Activated CD4-positive, alpha-beta memory T cell treated with anti-CD3 and anti-CD28 coated beads for 36 hours (primary cell): ENCODE measurements at regions of chr13 and their contacts with region 1.

Region 1: GRCh38 chr13:40982772-40983171 is 36.3 kb downstream of the ELF1 start:
- DNase-seq: peak; percentile 60
- H3K4me3 Mint-ChIP-seq: peak overlapping the region; percentile 81
- H3K27ac Mint-ChIP-seq: peak overlapping the region; percentile 92
- H3K4me1 Mint-ChIP-seq: peaks cover 61% of the 10 kb centered on the region
- H3K27me3 Mint-ChIP-seq: no peaks in the 10 kb centered on the region

Region 2: GRCh38 chr13:40770934-40771618 is 211.7 kb before region 1 on chr13 and contains the start of gene MRPS31:
- CTCF ChIA-PET with region 1: no interaction called
- POLR2A ChIA-PET with region 1: no interaction called
- intact Hi-C with region 1: loop called (anchors 2 kb)
- DNase-seq: peak; percentile 97
- H3K4me3 Mint-ChIP-seq: peak within 1 kb of the TSS; percentile 100
- H3K27ac Mint-ChIP-seq: peak within 1 kb of the TSS; percentile 94
- H3K4me1 Mint-ChIP-seq: peaks cover 34% of the 10 kb centered on the region
- H3K27me3 Mint-ChIP-seq: no peaks in the 10 kb centered on the region
- total RNA-seq, gene MRPS31: 35.6 to 40.4 TPM

Region 3: GRCh38 chr13:40789275-40790133 is 193.3 kb before region 1 on chr13 and contains the start of gene SLC25A15:
- CTCF ChIA-PET with region 1: no interaction called
- POLR2A ChIA-PET with region 1: no interaction called
- intact Hi-C with region 1: no loop called
- DNase-seq: peak; percentile 80
- H3K4me3 Mint-ChIP-seq: peak within 1 kb of the TSS; percentile 77
- H3K27ac Mint-ChIP-seq: peak within 1 kb of the TSS; percentile 67
- H3K4me1 Mint-ChIP-seq: peaks cover 31% of the 10 kb centered on the region
- H3K27me3 Mint-ChIP-seq: no peaks in the 10 kb centered on the region
- total RNA-seq, gene SLC25A15: 16.2 to 16.9 TPM

Region 4: GRCh38 chr13:40969169-40969901 is 13.4 kb before region 1 on chr13:
- CTCF ChIA-PET with region 1: interaction called, 14 read pairs
- POLR2A ChIA-PET with region 1: interaction called, 5 read pairs
- intact Hi-C with region 1: loop called (anchors 1 kb)
- DNase-seq: peak; percentile 57
- H3K4me3 Mint-ChIP-seq: peak overlapping the region; percentile 9
- H3K27ac Mint-ChIP-seq: peak overlapping the region; percentile 68
- H3K4me1 Mint-ChIP-seq: peaks cover 90% of the 10 kb centered on the region
- H3K27me3 Mint-ChIP-seq: no peaks in the 10 kb centered on the region

Region 5: DNA sequence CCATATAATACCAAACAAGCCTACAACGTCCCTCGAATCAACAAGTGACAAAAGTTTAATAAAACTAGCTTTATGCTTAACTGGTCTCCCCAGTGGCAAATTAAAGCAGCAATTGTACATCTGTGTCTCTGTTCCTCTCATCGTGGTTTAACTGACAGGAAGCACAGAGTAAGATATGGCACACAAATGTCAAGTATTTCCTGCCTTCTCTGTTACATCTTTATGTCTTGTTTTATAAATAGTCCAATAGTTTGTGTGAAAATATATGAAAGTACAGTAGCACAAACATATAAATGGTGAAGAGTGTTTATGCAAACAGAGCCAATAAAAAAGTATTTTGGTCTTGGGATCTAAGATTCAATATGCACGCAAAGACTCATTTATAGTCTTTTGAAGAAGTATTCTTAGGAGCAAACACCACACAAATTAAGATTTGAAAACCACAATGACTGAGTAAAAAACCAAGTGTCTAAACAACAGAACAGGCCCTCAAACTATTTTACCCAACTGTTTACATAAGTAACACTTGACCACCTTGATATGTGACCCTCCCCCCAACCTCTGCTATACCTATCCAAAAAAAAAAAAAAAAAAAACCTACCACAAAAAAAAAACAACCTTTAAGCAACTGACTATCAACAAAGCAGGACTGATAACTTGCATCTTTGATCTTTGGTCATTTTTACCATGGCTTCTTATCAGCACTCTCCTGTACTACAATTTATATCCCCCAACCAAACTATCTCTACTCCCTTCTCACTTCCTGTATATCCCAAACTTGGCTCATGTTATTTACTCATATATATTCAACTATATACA is 22.3 kb after region 1 on chr13:
- CTCF ChIA-PET with region 1: interaction called, 5 read pairs
- POLR2A ChIA-PET with region 1: interaction called, 6 read pairs
- intact Hi-C with region 1: loop called (anchors 1 kb)
- DNase-seq: no peak
- H3K4me3 Mint-ChIP-seq: peak overlapping the region; percentile 64
- H3K27ac Mint-ChIP-seq: peak overlapping the region; percentile 79
- H3K4me1 Mint-ChIP-seq: peaks cover 65% of the 10 kb centered on the region
- H3K27me3 Mint-ChIP-seq: no peaks in the 10 kb centered on the region

Region 6: GRCh38 chr13:41019011-41019487 is 36.3 kb after region 1 on chr13 and contains the start of gene ELF1:
- CTCF ChIA-PET with region 1: interaction called, 5 read pairs
- POLR2A ChIA-PET with region 1: interaction called, 87 read pairs
- intact Hi-C with region 1: loop called (anchors 1 kb)
- DNase-seq: peak; percentile 67
- H3K4me3 Mint-ChIP-seq: peak within 1 kb of the TSS; percentile 92
- H3K27ac Mint-ChIP-seq: peak within 1 kb of the TSS; percentile 98
- H3K4me1 Mint-ChIP-seq: peaks cover 36% of the 10 kb centered on the region
- H3K27me3 Mint-ChIP-seq: no peaks in the 10 kb centered on the region
- total RNA-seq, gene ELF1: 70.8 to 71.2 TPM

Region 7: DNA sequence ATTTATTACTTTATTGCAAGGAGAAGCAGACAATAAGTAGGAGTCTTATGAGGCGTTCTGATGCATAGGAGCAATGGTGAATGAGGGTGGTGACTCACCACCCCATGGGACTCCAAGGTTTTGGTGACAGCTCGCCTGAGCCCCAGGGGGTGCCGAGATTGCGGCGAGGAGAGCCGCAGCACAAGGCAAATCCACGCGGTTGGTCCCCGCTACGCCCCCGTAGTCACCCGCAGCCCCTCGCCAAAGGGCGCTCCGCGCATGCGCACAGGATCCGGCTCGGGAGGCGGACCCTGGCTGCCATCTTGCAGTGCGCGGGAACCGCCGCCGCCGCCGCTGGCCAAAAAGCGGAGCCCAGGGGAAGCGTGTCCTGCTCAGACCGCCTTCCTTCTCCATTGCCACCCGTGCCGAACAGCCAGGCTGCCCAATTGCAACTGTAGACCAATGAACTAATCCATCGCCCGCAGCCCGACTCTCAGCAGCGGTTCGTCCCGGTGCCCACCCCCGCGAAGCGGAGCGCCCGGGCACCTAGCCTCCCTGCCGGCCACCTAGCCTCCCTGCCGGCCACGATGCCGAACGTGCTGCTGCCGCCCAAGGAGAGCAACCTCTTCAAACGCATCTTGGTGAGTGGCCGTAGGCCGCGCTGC is 328.3 kb after region 1 on chr13 and contains the start of gene NAA16:
- CTCF ChIA-PET with region 1: no interaction called
- POLR2A ChIA-PET with region 1: no interaction called
- intact Hi-C with region 1: loop called (anchors 1 kb)
- DNase-seq: peak; percentile 97
- H3K4me3 Mint-ChIP-seq: peak within 1 kb of the TSS; percentile 93
- H3K27ac Mint-ChIP-seq: peak within 1 kb of the TSS; percentile 92
- H3K4me1 Mint-ChIP-seq: peaks cover 34% of the 10 kb centered on the region
- H3K27me3 Mint-ChIP-seq: no peaks in the 10 kb centered on the region
- total RNA-seq, gene NAA16: 19.2 to 23.2 TPM